ENCODE measurements at regions of chr1 and their contacts with region 1.

Region 1: GRCh38 chr1:160951443-160952128 is 3.0 kb downstream of the ITLN2 start:
- DNase-seq: peak; percentile 82
- H3K4me3 Mint-ChIP-seq: no peak overlapping the region
- H3K27ac Mint-ChIP-seq: peak overlapping the region; percentile 3
- H3K4me1 Mint-ChIP-seq: peaks cover 55% of the 10 kb centered on the region
- H3K27me3 Mint-ChIP-seq: no peaks in the 10 kb centered on the region
- CTCF ChIP-seq: peak; percentile 93

Region 2: DNA sequence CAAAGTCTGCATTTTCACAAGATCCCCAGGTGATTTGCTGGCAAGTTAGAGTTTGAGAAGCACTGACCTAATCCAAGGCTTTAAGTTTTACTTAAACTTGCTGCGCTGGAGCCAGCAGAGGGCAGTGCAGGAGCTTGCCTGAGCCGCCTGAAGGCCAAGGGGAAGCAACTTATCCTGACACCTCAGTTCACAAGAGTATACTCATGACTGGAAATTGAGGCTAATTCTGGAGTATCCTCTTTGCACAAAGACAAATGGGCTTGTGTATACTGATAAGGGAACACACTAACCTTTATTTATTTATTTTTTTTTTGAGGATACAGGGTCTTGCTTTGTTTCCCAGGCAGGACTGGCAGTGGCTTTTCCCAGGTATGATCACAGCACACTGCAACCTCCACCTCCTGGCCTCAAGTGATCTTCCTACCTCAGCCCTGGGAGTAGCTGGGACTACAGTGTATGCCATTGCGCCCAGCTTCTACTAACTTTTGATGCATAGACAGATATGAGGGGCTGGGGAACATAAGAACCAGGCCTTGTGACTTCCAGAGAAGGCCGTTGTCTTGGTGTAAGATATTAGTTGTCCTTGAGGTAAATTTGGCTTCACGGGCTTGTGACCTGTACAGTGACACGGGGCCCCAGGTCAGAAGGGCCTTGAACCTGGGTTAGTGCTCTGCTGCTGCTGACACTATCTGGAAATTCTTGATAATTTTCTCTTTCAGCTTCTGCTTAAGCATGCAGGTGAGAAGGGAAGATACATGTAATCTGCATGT is 275.8 kb before region 1 on chr1:
- CTCF ChIA-PET with region 1: interaction called, 32 read pairs
- POLR2A ChIA-PET with region 1: interaction called, 4 read pairs
- intact Hi-C with region 1: loop called (anchors 1 kb)
- DNase-seq: peak; percentile 74
- H3K4me3 Mint-ChIP-seq: no peak overlapping the region
- H3K27ac Mint-ChIP-seq: no peak overlapping the region
- H3K4me1 Mint-ChIP-seq: no peaks in the 10 kb centered on the region
- H3K27me3 Mint-ChIP-seq: peaks cover 31% of the 10 kb centered on the region
- CTCF ChIP-seq: peak; percentile 90

Region 3: GRCh38 chr1:160777486-160778089 is 174.0 kb before region 1 on chr1:
- CTCF ChIA-PET with region 1: interaction called, 5 read pairs
- POLR2A ChIA-PET with region 1: interaction called, 3 read pairs
- intact Hi-C with region 1: loop called (anchors 1 kb)
- DNase-seq: peak; percentile 71
- H3K4me3 Mint-ChIP-seq: no peak overlapping the region
- H3K27ac Mint-ChIP-seq: no peak overlapping the region
- H3K4me1 Mint-ChIP-seq: no peaks in the 10 kb centered on the region
- H3K27me3 Mint-ChIP-seq: no peaks in the 10 kb centered on the region
- CTCF ChIP-seq: peak; percentile 85

Region 4: GRCh38 chr1:160844447-160845232 is 106.9 kb before region 1 on chr1:
- CTCF ChIA-PET with region 1: interaction called, 51 read pairs
- POLR2A ChIA-PET with region 1: interaction called, 9 read pairs
- intact Hi-C with region 1: no loop called
- DNase-seq: peak; percentile 32
- H3K4me3 Mint-ChIP-seq: no peak overlapping the region
- H3K27ac Mint-ChIP-seq: no peak overlapping the region
- H3K4me1 Mint-ChIP-seq: no peaks in the 10 kb centered on the region
- H3K27me3 Mint-ChIP-seq: peaks cover 17% of the 10 kb centered on the region
- CTCF ChIP-seq: no peak

Region 5: DNA sequence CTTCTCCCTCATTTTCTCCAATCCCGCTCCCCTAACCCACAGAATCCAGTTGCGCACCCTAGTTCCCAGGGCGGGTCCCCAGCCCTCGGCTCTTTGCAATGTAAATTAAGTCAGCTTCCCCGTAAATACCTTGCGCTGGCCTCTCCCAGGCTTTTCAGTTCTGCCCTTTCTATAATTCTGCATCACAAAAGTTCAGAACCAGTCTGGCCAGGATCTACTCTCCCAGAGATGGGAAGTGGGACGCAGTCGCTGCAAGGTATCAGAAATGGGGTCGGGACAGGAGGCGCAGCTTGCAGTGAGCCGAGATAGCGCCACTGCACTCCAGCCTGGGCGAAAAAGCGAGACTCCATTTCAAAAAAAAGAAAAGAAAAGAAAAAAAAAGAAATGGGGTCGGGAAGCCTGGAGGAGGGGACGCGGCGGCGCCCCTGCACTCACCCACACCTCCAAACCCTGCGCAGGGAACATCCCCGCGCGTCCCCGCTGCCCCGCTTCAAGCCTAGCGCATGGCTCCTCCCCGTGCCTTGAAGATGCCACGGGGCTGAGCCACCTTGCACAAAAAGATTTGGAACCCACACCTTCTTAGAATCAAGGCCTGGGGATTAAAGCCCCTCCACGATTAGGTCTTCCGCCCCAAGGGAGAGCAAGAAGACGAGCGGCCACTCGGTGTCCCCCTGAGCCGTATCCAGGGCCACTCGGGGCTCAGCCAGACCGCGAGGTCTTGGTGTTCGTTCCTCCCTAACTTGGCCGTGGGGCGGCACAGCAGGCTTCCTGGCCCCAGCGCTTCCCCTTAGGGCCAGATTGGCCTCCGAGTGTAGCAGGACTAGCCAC is 30.2 kb after region 1 on chr1:
- CTCF ChIA-PET with region 1: interaction called, 130 read pairs
- POLR2A ChIA-PET with region 1: interaction called, 15 read pairs
- intact Hi-C with region 1: no loop called
- DNase-seq: no peak
- H3K4me3 Mint-ChIP-seq: no peak overlapping the region
- H3K27ac Mint-ChIP-seq: no peak overlapping the region
- H3K4me1 Mint-ChIP-seq: no peaks in the 10 kb centered on the region
- H3K27me3 Mint-ChIP-seq: no peaks in the 10 kb centered on the region
- CTCF ChIP-seq: no peak

Region 6: DNA sequence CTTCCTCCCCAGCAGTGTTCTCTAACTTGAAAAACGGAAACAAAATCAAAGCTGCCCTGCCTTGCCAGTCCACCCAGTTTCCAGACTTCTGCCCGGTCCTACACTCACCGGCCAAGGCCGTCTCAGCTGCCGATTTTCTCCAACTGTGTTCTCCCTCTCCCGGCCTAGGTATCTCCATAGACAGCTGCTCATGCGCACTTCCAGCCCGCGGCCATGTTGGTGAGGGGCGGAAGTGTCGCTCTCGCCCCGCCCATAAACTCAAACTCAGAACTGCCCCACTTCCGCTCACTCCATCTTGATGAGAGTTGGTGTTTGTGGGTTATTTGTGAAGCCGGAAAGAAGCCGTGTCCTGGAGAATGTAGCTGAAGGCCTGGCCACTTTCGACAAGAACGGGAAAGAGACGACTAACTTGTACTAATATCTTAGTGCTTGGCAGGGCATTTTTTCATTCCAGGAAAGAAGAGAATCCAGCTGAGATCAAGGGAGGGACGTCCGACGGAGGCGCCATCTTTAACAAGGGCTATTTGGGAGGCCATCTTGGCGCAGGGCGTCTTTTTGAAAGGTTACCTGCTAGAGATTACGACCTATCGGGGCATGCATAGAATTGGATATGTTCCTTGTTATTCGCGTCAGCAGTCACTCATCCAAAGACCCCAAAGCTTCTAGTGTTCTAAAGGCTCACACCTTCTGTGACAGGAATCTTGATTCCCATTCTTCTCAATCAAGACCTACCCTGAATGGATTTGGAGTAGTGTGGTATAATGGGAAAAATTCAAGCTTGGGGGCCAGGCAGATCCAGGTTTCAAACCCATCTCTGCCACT is 94.4 kb after region 1 on chr1 and contains the start of gene USF1:
- CTCF ChIA-PET with region 1: interaction called, 10 read pairs
- POLR2A ChIA-PET with region 1: interaction called, 25 read pairs
- intact Hi-C with region 1: no loop called
- DNase-seq: peak; percentile 99
- H3K4me3 Mint-ChIP-seq: peak within 1 kb of the TSS; percentile 93
- H3K27ac Mint-ChIP-seq: peak within 1 kb of the TSS; percentile 99
- H3K4me1 Mint-ChIP-seq: peaks cover 18% of the 10 kb centered on the region
- H3K27me3 Mint-ChIP-seq: no peaks in the 10 kb centered on the region
- CTCF ChIP-seq: no peak
- total RNA-seq, gene USF1: 48.8 and 52.8 TPM in 2 replicates

Region 7: GRCh38 chr1:161153679-161154426 is 202.3 kb after region 1 on chr1 and contains the start of gene UFC1:
- CTCF ChIA-PET with region 1: no interaction called
- POLR2A ChIA-PET with region 1: interaction called, 10 read pairs
- intact Hi-C with region 1: no loop called
- DNase-seq: peak; percentile 94
- H3K4me3 Mint-ChIP-seq: peak within 1 kb of the TSS; percentile 92
- H3K27ac Mint-ChIP-seq: peak within 1 kb of the TSS; percentile 100
- H3K4me1 Mint-ChIP-seq: peaks cover 18% of the 10 kb centered on the region
- H3K27me3 Mint-ChIP-seq: no peaks in the 10 kb centered on the region
- CTCF ChIP-seq: no peak
- total RNA-seq, gene UFC1: 123 and 125 TPM in 2 replicates